Activated CD4-positive, alpha-beta T cell treated with anti-CD3 and anti-CD28 coated beads for 36 hours (primary cell): ENCODE measurements at regions of chr9 and their contacts with region 1.

Region 1: GRCh38 chr9:116737152-116737546 is 50.0 kb downstream of the TRIM32 start:
- DNase-seq: peak; percentile 82
- ATAC-seq: no peak
- H3K4me3 Mint-ChIP-seq: no peak overlapping the region
- H3K27ac Mint-ChIP-seq: no peak overlapping the region
- H3K4me1 Mint-ChIP-seq: no peaks in the 10 kb centered on the region
- H3K27me3 Mint-ChIP-seq: peaks cover 13% of the 10 kb centered on the region

Region 2: DNA sequence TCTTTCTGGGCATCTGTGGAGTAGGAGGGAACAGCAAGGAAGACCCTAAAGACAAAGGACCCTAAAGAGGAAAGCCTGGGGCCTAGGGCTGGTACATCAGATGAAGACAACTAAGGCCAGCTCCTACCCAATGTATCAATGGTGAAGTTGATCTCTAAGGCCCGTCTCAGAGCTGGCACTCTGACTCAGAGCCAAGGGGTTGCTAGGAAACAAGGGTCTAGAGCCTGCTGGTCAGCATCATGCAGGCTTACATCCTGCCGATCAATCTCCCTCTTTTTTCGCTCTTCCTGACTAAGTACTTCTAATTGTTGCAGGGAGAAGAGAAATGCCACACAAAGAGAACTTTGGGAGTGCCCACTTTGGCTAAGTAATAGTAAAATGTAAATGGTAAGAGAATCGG is 23.9 kb before region 1 on chr9:
- CTCF ChIA-PET with region 1: no interaction called
- POLR2A ChIA-PET with region 1: no interaction called
- intact Hi-C with region 1: no loop called
- DNase-seq: no peak
- ATAC-seq: no peak
- H3K4me3 Mint-ChIP-seq: no peak overlapping the region
- H3K27ac Mint-ChIP-seq: no peak overlapping the region
- H3K4me1 Mint-ChIP-seq: no peaks in the 10 kb centered on the region
- H3K27me3 Mint-ChIP-seq: no peaks in the 10 kb centered on the region

Region 3: GRCh38 chr9:116726602-116727001 is 10.5 kb before region 1 on chr9:
- CTCF ChIA-PET with region 1: interaction called, 14 read pairs
- POLR2A ChIA-PET with region 1: no interaction called
- intact Hi-C with region 1: no loop called
- DNase-seq: no peak
- ATAC-seq: no peak
- H3K4me3 Mint-ChIP-seq: no peak overlapping the region
- H3K27ac Mint-ChIP-seq: no peak overlapping the region
- H3K4me1 Mint-ChIP-seq: no peaks in the 10 kb centered on the region
- H3K27me3 Mint-ChIP-seq: peaks cover 5% of the 10 kb centered on the region

Region 4: GRCh38 chr9:116860509-116861120 is 123.5 kb after region 1 on chr9:
- CTCF ChIA-PET with region 1: interaction called, 27 read pairs
- POLR2A ChIA-PET with region 1: no interaction called
- intact Hi-C with region 1: loop called (anchors 1 kb)
- DNase-seq: peak; percentile 47
- ATAC-seq: no peak
- H3K4me3 Mint-ChIP-seq: no peak overlapping the region
- H3K27ac Mint-ChIP-seq: no peak overlapping the region
- H3K4me1 Mint-ChIP-seq: no peaks in the 10 kb centered on the region
- H3K27me3 Mint-ChIP-seq: peaks cover 3% of the 10 kb centered on the region

Region 5: GRCh38 chr9:116939614-116940013 is 202.5 kb after region 1 on chr9:
- CTCF ChIA-PET with region 1: no interaction called
- POLR2A ChIA-PET with region 1: no interaction called
- intact Hi-C with region 1: no loop called
- DNase-seq: no peak
- ATAC-seq: no peak
- H3K4me3 Mint-ChIP-seq: no peak overlapping the region
- H3K27ac Mint-ChIP-seq: no peak overlapping the region
- H3K4me1 Mint-ChIP-seq: no peaks in the 10 kb centered on the region
- H3K27me3 Mint-ChIP-seq: peaks cover 3% of the 10 kb centered on the region

Region 6: DNA sequence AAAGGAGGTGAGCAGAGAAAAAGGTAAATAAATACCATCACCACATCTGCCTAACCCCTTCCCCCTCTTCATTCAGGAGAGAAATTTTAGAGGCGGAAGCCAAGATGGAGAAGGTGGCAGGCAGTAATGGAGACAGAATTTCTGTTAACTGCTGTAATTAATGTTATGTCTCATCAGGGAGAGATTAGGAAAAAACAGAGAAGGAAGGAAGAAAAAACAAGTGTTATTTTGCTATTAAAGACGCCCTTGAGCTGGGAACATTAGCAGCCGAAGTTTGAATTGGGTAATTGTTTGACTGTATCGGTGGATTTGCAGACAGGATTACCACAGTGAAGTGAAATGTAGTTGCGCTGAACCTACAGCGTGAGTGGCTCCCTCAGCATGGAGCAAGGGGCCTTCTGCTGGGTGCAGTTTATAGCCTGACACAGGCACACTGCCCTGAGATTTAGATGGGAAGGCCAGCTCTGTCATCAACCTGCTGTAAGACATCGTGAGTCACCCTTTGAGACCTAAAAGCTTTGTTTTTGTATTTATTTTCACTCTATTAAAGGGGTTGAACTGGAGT is 541.4 kb after region 1 on chr9:
- CTCF ChIA-PET with region 1: no interaction called
- POLR2A ChIA-PET with region 1: no interaction called
- intact Hi-C with region 1: loop called in 1 of 2 experiments (anchors 10 kb)
- DNase-seq: no peak
- ATAC-seq: no peak
- H3K4me3 Mint-ChIP-seq: no peak overlapping the region
- H3K27ac Mint-ChIP-seq: no peak overlapping the region
- H3K4me1 Mint-ChIP-seq: no peaks in the 10 kb centered on the region
- H3K27me3 Mint-ChIP-seq: no peaks in the 10 kb centered on the region